Activated CD4-positive, alpha-beta memory T cell treated with anti-CD3 and anti-CD28 coated beads, Interleukin-2, amount 10 ng/mL, durations not matched to agents 7 days and 5 days (primary cell): ENCODE measurements at regions of chr10 and their contacts with region 1.

Region 1: GRCh38 chr10:114470956-114471905 is 66.9 kb upstream of the AFAP1L2 start:
- DNase-seq: peak; percentile 70
- H3K4me3 Mint-ChIP-seq: no peak overlapping the region
- H3K27ac Mint-ChIP-seq: peak overlapping the region; percentile 31
- H3K4me1 Mint-ChIP-seq: peaks cover 27% of the 10 kb centered on the region
- H3K27me3 Mint-ChIP-seq: no peaks in the 10 kb centered on the region

Region 2: GRCh38 chr10:114304017-114304570 is 167.1 kb before region 1 on chr10:
- CTCF ChIA-PET with region 1: interaction called, 19 read pairs
- POLR2A ChIA-PET with region 1: interaction called, 3 read pairs
- DNase-seq: peak; percentile 77
- H3K4me3 Mint-ChIP-seq: peak overlapping the region; percentile 75
- H3K27ac Mint-ChIP-seq: peak overlapping the region; percentile 24
- H3K4me1 Mint-ChIP-seq: peaks cover 13% of the 10 kb centered on the region
- H3K27me3 Mint-ChIP-seq: no peaks in the 10 kb centered on the region

Region 3: GRCh38 chr10:114458955-114459354 is 12.3 kb before region 1 on chr10:
- CTCF ChIA-PET with region 1: interaction called, 23 read pairs
- POLR2A ChIA-PET with region 1: no interaction called
- DNase-seq: peak; percentile 33
- H3K4me3 Mint-ChIP-seq: no peak overlapping the region
- H3K27ac Mint-ChIP-seq: no peak overlapping the region
- H3K4me1 Mint-ChIP-seq: peaks cover 4% of the 10 kb centered on the region
- H3K27me3 Mint-ChIP-seq: no peaks in the 10 kb centered on the region

Region 4: GRCh38 chr10:114499630-114500190 is 28.5 kb after region 1 on chr10:
- CTCF ChIA-PET with region 1: interaction called, 21 read pairs
- POLR2A ChIA-PET with region 1: no interaction called
- DNase-seq: peak; percentile 66
- H3K4me3 Mint-ChIP-seq: peak overlapping the region; percentile 23
- H3K27ac Mint-ChIP-seq: peak overlapping the region; percentile 90
- H3K4me1 Mint-ChIP-seq: peaks cover 78% of the 10 kb centered on the region
- H3K27me3 Mint-ChIP-seq: no peaks in the 10 kb centered on the region

Region 5: GRCh38 chr10:114541081-114541796 is 70.0 kb after region 1 on chr10:
- CTCF ChIA-PET with region 1: interaction called, 74 read pairs
- POLR2A ChIA-PET with region 1: interaction called, 29 read pairs
- DNase-seq: peak; percentile 83
- H3K4me3 Mint-ChIP-seq: peak overlapping the region; percentile 52
- H3K27ac Mint-ChIP-seq: peak overlapping the region; percentile 98
- H3K4me1 Mint-ChIP-seq: peaks cover 91% of the 10 kb centered on the region
- H3K27me3 Mint-ChIP-seq: no peaks in the 10 kb centered on the region

Region 6: DNA sequence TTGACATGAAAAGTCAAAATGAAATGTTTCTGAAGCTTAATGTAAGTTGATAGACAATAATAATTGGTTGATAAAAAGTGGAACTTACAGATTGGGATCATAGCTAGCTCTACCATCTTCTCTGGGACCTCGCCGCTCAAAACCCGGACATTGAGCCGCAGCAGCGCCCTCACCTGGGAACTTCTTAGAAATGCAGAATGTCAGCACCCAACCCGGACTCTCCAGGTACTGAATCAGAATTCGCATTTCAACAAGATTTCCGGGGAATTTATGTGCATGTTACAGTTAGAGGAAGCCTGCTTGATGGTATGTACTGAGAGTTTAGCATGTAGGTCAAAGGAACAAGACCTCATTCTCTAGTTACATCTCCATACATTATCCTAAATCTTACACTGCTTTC is 223.5 kb after region 1 on chr10:
- CTCF ChIA-PET with region 1: interaction called, 18 read pairs
- POLR2A ChIA-PET with region 1: no interaction called
- DNase-seq: peak; percentile 37
- H3K4me3 Mint-ChIP-seq: no peak overlapping the region
- H3K27ac Mint-ChIP-seq: no peak overlapping the region
- H3K4me1 Mint-ChIP-seq: peaks cover 13% of the 10 kb centered on the region
- H3K27me3 Mint-ChIP-seq: peaks cover 22% of the 10 kb centered on the region

Region 7: DNA sequence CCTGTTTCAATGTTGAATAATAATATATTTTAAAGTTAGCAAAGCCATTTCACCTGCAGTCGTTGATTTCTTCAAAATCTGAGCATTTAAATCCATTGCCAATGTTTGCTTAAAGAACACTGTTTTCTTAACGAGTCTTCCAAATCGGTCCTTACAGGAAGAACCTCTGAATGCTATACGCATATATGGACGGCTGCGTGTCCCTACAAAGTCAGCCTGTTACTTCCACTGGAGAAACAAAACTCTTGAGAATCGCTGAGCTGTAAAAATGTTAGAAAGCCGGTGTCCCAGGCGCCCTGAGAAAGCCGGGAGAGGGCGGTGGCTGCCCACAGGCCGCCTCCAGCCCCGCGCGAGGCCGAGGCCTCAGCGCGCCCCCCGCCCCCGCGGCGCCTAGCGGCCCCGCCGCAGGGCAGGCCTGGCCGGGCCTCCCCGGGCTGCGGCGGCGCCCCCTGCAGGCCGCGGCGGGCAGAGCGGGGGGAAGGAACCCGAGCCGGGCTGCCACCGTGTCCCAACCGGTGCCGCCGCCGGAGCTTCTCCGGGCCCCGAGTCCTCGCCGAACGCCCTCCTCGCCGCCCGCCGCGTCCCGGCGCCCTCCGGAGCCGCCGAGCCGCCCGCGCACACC is 350.2 kb after region 1 on chr10 and contains the start of gene FHIP2A:
- CTCF ChIA-PET with region 1: interaction called, 13 read pairs
- POLR2A ChIA-PET with region 1: no interaction called
- DNase-seq: peak; percentile 85
- H3K4me3 Mint-ChIP-seq: peak within 1 kb of the TSS; percentile 86
- H3K27ac Mint-ChIP-seq: peak within 1 kb of the TSS; percentile 95
- H3K4me1 Mint-ChIP-seq: peaks cover 42% of the 10 kb centered on the region
- H3K27me3 Mint-ChIP-seq: peaks cover 10% of the 10 kb centered on the region
- total RNA-seq, gene FHIP2A: 34.3 to 39.2 TPM